CD4-positive, alpha-beta memory T cell (primary cell): ENCODE measurements at regions of chrX and their contacts with region 1.

Region 1: GRCh38 chrX:120228187-120228908 is 22.3 kb upstream of the ZBTB33 start:
- DNase-seq: no peak
- H3K4me3 ChIP-seq: no peak overlapping the region
- H3K4me3 Mint-ChIP-seq: no peak overlapping the region
- H3K27ac ChIP-seq: no peak overlapping the region
- H3K27ac Mint-ChIP-seq: no peak overlapping the region
- H3K4me1 ChIP-seq: no peaks in the 10 kb centered on the region
- H3K4me1 Mint-ChIP-seq: peaks cover 0 to 5% (median 0%) of the 10 kb centered on the region in 4 donors
- H3K27me3 ChIP-seq: no peaks in the 10 kb centered on the region
- H3K27me3 Mint-ChIP-seq: no peaks in the 10 kb centered on the region

Region 2: DNA sequence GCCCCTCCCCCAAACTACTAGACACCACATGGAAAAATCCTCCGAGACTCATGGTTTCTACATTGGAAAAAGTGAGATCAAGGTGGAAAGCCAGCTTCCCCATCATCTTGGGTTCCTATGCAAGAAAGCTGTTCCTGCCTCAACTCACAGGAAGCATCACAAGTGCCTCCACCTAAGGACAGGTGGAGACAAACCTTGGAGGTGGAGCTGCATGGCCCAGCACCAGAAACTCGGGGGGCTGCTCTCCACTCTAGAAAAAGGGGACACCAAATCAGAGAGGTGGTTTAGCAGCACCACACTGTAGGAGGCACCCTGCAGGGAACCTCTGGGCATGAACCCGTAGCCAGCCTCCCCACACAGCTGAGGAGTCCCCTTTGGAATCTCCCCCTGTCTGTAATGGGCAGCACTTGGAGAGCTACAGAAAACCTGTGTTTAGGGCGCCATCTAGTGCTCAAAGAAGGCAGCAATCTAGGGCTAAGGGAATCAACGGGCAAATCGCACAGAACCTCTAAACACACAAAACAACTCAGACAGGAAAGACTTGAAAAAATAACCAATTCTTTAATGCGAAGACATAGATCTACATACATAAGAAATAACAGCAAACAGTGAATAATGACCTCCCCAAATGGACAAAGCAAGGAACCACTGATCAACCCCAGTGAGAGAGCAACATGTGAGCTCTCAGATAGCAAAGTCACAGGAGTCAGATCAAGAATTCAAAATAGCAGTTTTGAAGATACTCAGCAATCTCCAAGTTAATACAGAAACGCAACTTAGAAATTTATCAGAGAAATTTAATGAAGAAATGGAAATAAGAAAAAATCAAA is 14.7 kb before region 1 on chrX:
- CTCF ChIA-PET with region 1: interaction called, 20 read pairs
- POLR2A ChIA-PET with region 1: no interaction called
- intact Hi-C with region 1: no loop called
- DNase-seq: peak; percentile 38 to 52 (median 44)
- H3K4me3 ChIP-seq: no peak overlapping the region
- H3K4me3 Mint-ChIP-seq: no peak overlapping the region
- H3K27ac ChIP-seq: no peak overlapping the region
- H3K27ac Mint-ChIP-seq: no peak overlapping the region
- H3K4me1 ChIP-seq: no peaks in the 10 kb centered on the region
- H3K4me1 Mint-ChIP-seq: peaks cover 3 to 7% (median 5%) of the 10 kb centered on the region in 4 donors
- H3K27me3 ChIP-seq: no peaks in the 10 kb centered on the region
- H3K27me3 Mint-ChIP-seq: no peaks in the 10 kb centered on the region